Lower leg skin (tissue), 4 donors: ENCODE measurements at regions of chr9 and their contacts with region 1.

Region 1: GRCh38 chr9:126500684-126501382 is 112.9 kb upstream of the LMX1B start:
- DNase-seq: peak; percentile 47 to 95
- H3K4me3 ChIP-seq: no peak overlapping the region
- CTCF ChIP-seq: peak in 2 of 3 donors; percentile 3 to 63
- POLR2A ChIP-seq: no peak

Region 2: GRCh38 chr9:126439402-126439765 is 61.4 kb before region 1 on chr9:
- intact Hi-C with region 1: no loop called
- DNase-seq: peak in 1 of 2 donors; percentile 1
- H3K4me3 ChIP-seq: no peak overlapping the region
- CTCF ChIP-seq: no peak
- POLR2A ChIP-seq: no peak

Region 3: DNA sequence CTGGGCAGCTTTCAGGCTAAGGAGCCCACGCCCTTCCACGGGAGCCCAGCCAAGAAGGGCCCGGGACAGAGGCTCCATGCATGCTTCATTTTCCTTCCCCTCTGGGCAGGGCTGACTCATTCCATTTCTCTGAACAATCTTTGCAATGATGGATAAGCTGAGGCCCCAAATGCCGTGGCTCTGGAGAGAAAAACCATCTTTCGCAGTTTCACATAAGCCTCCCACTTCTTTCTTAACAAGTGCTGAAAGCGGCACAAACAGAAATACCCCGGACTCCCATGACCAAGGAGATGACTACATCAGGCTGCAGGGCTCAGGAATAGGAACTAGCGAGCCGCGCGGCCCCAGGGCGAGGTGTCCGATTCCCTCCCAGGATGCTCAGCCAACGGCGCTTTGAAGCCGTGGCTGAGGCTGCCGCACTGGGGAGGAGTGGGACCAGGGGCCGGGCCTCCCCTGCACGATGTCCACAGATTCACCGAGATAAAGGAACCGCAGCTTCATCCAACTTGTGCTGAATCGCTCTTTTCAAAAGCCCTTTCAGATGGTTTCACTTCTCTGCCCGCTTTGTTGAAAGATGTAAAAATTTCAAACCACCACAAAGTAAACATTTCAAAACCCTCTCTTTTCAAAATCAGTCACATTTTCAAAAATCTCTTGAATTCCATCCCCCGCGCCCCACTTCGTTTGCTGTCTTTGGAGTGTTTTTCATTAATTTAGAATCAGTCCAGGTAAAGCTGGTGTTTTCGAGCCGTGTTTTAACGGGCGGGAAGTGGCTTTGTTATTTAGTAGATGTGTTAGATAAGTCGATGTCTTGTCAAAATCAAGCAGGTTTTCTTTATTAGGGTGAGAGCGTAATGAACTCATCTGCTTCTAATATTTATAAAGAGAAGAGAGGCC is 16.4 kb after region 1 on chr9:
- intact Hi-C with region 1: loop called (anchors 1 kb)
- DNase-seq: peak; percentile 57 to 92
- H3K4me3 ChIP-seq: peak overlapping the region; percentile 2
- CTCF ChIP-seq: no peak
- POLR2A ChIP-seq: no peak

Region 4: DNA sequence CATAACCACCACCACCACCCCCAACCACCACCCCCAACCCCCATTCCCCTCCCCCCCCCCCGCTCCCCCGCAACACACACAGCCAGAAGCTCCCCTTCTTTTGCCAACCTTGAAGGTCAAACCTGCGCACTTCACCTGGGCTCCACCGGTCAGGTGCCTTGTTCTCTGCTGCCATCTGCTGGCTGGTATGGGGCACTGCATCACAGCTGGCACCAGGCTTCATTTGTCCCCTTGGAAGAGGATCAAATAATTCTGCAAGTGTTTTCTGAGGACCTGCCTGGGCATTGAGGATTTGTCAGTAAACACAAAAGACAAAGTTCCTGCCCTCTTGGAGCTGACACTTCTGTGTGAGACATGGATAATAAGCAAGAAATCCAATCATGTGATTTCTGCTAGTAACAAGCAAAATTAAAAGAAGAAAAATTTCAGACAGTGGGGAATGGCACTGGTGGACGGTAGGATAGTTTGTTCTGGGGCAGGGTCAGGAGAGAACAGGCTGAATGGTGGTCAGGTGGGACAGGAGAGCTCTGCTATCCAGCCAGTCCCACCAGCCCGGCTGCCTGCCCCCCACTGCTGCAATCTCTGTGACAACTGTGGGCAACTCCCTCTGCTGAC is 57.3 kb after region 1 on chr9:
- intact Hi-C with region 1: loop called (anchors 2 kb)
- DNase-seq: peak in 1 of 2 donors; percentile 43
- H3K4me3 ChIP-seq: no peak overlapping the region
- CTCF ChIP-seq: peak in 1 of 3 donors; percentile 78
- POLR2A ChIP-seq: no peak

Region 5: DNA sequence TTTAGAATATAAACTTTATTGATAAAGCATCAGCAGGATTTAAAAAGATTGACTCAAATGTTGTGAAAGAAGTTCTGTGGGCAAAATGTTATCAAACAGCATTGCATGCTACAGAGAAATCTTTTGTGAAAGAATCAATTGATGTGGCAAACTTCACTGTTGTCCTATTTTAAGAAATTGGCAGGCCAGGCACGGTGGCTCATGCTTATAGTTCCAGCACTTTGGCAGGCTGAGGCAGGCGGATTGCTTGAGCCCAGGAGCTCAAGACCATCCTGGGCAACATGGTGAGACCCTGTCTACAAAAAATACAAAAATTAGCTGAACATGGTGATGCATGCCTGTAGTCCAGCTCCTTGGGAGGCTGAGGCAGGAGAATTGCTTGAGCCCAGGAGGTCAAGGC is 321.4 kb after region 1 on chr9:
- intact Hi-C with region 1: no loop called
- DNase-seq: no peak
- H3K4me3 ChIP-seq: no peak overlapping the region
- CTCF ChIP-seq: no peak
- POLR2A ChIP-seq: no peak